Calu3 (cell line): ENCODE measurements at regions of chr12 and their contacts with region 1.

Region 1: GRCh38 chr12:23055004-23055403 is 430.0 kb downstream of the ETNK1 start:
- DNase-seq: peak; percentile 76
- H3K4me3 Mint-ChIP-seq: no peak overlapping the region
- H3K27ac Mint-ChIP-seq: no peak overlapping the region
- H3K4me1 Mint-ChIP-seq: no peaks in the 10 kb centered on the region
- H3K27me3 Mint-ChIP-seq: no peaks in the 10 kb centered on the region
- CTCF ChIP-seq: peak; percentile 61

Region 2: DNA sequence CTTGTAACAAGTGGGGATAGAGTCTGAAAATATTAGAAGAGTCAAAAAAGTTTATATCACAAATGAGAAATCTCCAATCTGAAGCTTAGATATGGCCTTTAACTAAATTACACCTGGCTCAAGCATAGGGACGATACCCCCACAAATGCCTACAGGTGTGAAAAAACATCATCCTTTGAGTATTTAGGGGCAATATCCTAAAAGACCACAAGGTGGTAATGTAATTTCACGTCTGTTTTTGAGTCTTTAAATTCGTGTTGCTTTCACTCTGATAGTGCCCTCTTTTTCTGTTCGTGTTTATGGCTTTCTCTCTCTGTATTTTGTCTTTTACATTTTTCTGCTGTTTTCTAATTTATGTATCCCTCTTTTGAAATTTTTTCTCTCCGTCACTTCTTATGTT is 345.7 kb before region 1 on chr12:
- CTCF ChIA-PET with region 1: no interaction called
- intact Hi-C with region 1: loop called (anchors 5 kb)
- DNase-seq: no peak
- H3K4me3 Mint-ChIP-seq: no peak overlapping the region
- H3K27ac Mint-ChIP-seq: no peak overlapping the region
- H3K4me1 Mint-ChIP-seq: no peaks in the 10 kb centered on the region
- H3K27me3 Mint-ChIP-seq: no peaks in the 10 kb centered on the region
- CTCF ChIP-seq: peak; percentile 27

Region 3: DNA sequence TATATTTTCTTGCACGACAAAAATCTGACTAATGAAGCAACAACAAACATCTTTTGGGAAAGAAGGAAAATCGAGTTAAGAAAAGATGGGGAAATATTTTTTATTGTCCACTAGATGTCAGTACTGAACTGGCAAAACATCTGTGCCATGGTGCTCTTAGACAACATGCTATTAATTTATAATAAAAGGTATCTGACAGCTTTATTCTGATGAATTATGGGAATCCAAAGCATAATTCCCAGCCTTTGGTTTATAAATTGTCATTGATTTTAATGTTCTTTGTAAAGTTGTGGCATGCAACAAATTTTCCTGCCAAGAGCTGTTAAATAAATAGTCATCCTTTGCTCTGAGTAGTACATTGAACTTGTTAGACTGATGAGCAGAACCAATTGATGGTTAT is 198.8 kb before region 1 on chr12:
- CTCF ChIA-PET with region 1: interaction called, 8 read pairs
- intact Hi-C with region 1: loop called (anchors 1 kb)
- DNase-seq: no peak
- H3K4me3 Mint-ChIP-seq: no peak overlapping the region
- H3K27ac Mint-ChIP-seq: no peak overlapping the region
- H3K4me1 Mint-ChIP-seq: peaks cover 6% of the 10 kb centered on the region
- H3K27me3 Mint-ChIP-seq: peaks cover 48% of the 10 kb centered on the region
- CTCF ChIP-seq: peak; percentile 47

Region 4: GRCh38 chr12:22874151-22874550 is 180.9 kb before region 1 on chr12:
- CTCF ChIA-PET with region 1: no interaction called
- intact Hi-C with region 1: no loop called
- DNase-seq: no peak
- H3K4me3 Mint-ChIP-seq: no peak overlapping the region
- H3K27ac Mint-ChIP-seq: no peak overlapping the region
- H3K4me1 Mint-ChIP-seq: no peaks in the 10 kb centered on the region
- H3K27me3 Mint-ChIP-seq: no peaks in the 10 kb centered on the region
- CTCF ChIP-seq: no peak

Region 5: GRCh38 chr12:23576372-23576771 is 521.4 kb after region 1 on chr12:
- CTCF ChIA-PET with region 1: no interaction called
- intact Hi-C with region 1: no loop called
- DNase-seq: no peak
- H3K4me3 Mint-ChIP-seq: no peak overlapping the region
- H3K27ac Mint-ChIP-seq: no peak overlapping the region
- H3K4me1 Mint-ChIP-seq: no peaks in the 10 kb centered on the region
- H3K27me3 Mint-ChIP-seq: no peaks in the 10 kb centered on the region
- CTCF ChIP-seq: no peak